ENCODE measurements at regions of chr20 and their contacts with region 1.

Region 1: DNA sequence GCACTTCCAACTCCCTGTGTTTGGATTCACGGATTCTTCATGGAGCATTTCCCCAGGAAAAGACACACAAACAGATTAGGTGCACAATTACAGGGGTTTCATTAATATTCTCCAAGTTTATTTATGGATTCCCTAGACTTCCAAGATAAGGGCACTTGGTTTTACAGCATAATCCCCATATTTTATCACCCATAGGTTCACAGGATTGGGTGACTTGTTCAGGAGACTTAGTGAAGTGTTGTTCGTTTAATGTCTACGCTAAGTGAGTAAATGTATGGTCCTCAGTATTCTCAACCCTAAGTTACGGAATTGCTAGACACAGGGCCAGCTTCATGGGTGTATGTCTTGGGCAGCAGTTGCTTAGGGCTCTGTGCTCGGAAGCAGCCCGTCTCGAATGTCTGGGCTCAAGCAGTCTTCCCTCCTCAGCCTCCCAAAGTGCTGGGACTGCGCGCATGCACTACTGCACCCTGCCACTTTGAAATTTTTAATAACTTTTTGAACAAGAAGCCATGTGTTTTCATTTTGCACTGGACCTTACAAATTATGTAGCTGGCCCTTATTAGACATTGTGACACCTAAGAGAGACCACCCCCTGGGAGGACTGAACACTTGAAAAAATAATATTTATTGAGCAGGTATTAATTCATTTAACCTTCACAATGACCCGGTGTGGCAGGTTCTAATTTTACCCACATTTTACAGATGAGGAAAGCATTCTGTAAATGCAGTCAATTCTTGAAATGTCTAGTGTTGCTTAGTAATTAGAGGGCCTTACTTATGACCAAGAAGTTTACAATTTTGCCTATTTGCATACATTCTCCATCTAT is 91.5 kb upstream of the ZNF217 start:
- DNase-seq: no peak
- ATAC-seq: no peak
- H3K4me3 Mint-ChIP-seq: no peak overlapping the region
- H3K27ac Mint-ChIP-seq: peak overlapping the region; percentile 87
- H3K4me1 Mint-ChIP-seq: peaks cover 31% of the 10 kb centered on the region
- H3K27me3 Mint-ChIP-seq: no peaks in the 10 kb centered on the region

Region 2: DNA sequence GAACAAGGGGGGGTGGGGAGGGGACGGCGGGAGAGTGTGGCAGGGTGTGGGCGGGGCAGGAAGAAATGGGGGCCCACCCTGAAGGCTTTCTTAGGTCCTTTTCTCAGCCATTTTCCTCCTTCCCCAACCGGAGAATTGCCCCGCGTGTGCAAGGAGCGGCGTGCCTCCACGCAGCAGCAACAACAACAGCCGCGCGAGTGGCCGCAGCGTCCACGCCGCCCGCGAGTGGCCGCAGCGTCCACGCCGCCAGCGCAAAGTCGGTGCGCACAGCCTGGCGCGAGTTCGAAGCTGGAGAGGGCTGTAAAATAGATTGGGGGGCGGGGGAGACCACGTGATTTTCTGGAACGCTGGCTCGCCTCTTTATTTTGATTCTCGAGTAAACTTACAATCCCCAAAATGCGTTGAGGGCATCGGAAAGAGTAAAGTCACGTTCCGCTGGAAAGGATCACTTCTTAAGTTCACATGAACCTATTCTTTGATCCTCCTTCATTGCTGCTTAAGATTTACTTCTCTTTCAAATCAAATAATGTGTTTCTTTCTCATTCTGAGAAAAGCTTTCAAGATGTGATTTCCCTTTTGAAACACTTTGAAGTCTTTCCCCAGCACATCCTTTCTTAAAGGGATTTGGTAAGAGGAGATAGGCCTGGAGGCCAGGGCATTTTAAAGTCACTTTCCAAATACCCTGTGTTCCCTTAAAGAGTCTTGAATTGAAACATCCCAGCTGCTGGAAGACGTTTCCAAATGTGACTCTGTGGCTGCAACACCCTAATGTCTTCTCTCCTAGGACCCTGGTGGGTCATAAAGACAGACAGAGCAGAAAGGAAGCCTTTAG is 24.9 kb before region 1 on chr20:
- CTCF ChIA-PET with region 1: interaction called, 11 read pairs
- DNase-seq: peak; percentile 68
- ATAC-seq: peak; percentile 48
- H3K4me3 Mint-ChIP-seq: peak overlapping the region; percentile 82
- H3K27ac Mint-ChIP-seq: peak overlapping the region; percentile 94
- H3K4me1 Mint-ChIP-seq: peaks cover 53% of the 10 kb centered on the region
- H3K27me3 Mint-ChIP-seq: no peaks in the 10 kb centered on the region

Region 3: GRCh38 chr20:54025251-54025771 is 340.1 kb after region 1 on chr20:
- CTCF ChIA-PET with region 1: no interaction called
- DNase-seq: no peak
- ATAC-seq: no peak
- H3K4me3 Mint-ChIP-seq: no peak overlapping the region
- H3K27ac Mint-ChIP-seq: no peak overlapping the region
- H3K4me1 Mint-ChIP-seq: no peaks in the 10 kb centered on the region
- H3K27me3 Mint-ChIP-seq: peaks cover 10% of the 10 kb centered on the region